Gastrocnemius medialis (tissue), 4 donors: ENCODE measurements at regions of chr17 and their contacts with region 1.

Region 1: DNA sequence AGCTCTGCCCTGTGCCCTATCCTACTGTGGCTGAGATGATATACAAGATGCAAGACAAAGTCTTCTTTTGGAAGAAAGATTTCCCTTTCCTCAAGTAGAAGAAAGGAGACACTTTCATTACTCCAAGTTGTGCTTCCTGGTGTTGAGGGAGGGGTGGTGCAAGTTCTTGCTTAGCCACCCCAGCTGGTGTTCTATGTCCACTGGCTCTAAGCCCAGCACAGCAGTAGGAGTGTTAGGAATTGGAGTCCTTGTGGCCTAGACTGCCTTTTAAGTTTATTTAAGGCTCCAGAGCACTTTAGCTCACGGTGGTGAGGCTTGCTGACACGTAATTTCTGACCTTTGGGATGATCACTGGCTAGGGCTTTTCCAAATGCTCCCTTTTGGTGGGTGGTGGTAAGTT is 109.7 kb downstream of the KIF2B start:
- DNase-seq: peak in 1 of 2 donors; percentile 54
- ATAC-seq: peak; percentile 3 to 53
- H3K4me3 ChIP-seq: no peak overlapping the region
- H3K27ac ChIP-seq: peak overlapping the region in 2 of 4 donors; percentile 39 to 54
- H3K4me1 ChIP-seq: peaks cover 0 to 30% of the 10 kb centered on the region in 2 donors
- H3K27me3 ChIP-seq: no peaks in the 10 kb centered on the region
- CTCF ChIP-seq: no peak
- POLR2A ChIP-seq: no peak

Region 2: DNA sequence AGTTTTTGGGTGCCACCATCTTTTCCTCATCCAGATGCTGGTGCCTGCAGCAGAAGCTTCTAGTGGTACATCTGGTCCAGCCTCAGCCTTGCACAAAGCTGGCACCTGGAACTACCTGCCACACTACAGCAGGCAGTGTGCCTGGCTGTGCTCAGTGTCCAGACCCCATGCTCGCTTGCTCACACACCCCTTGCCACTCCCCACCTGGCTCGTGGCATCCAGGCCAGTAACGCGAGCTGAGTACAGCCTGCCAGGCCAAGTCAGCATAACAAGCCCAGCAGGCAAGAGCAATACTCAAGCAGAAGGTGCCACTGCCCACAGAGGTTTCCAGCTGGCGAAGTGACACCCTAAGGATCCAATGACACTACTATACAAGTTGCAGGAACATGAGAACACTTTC is 139.4 kb before region 1 on chr17:
- in situ Hi-C with region 1: no loop called
- intact Hi-C with region 1: loop called (anchors 5 kb)
- DNase-seq: peak; percentile 90 to 96
- ATAC-seq: peak; percentile 86 to 87
- H3K4me3 ChIP-seq: no peak overlapping the region
- H3K27ac ChIP-seq: peak overlapping the region; percentile 72 to 89 (median 88)
- H3K4me1 ChIP-seq: peaks cover 33 to 40% of the 10 kb centered on the region in 2 donors
- H3K27me3 ChIP-seq: no peaks in the 10 kb centered on the region
- CTCF ChIP-seq: no peak
- POLR2A ChIP-seq: no peak

Region 3: DNA sequence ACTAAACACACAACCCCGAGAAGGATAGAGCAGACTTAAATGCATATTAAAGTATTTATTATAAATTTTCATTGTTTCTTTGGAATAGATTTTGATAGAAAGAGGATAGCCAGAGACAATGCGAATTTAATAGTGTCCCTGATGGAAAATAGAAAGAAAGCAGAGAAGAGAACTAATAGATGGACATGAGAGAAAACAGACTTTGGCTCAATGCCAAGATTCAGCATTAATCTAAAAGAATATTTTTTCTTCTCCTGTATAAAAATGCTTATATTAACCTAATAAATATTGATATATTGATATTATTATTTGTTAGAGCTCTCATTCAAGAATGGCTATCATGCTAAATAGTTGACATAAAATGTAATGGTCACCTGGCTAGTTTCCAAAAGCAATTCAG is 63.7 kb after region 1 on chr17:
- in situ Hi-C with region 1: no loop called
- intact Hi-C with region 1: loop called (anchors 10 kb)
- DNase-seq: no peak
- ATAC-seq: no peak
- H3K4me3 ChIP-seq: no peak overlapping the region
- H3K27ac ChIP-seq: peak overlapping the region in 2 of 4 donors; percentile 47 to 70
- H3K4me1 ChIP-seq: peaks cover 6 to 9% of the 10 kb centered on the region in 2 donors
- H3K27me3 ChIP-seq: no peaks in the 10 kb centered on the region
- CTCF ChIP-seq: no peak
- POLR2A ChIP-seq: no peak